IMR-90 (cell line): ENCODE measurements at regions of chr6 and their contacts with region 1.

Region 1: DNA sequence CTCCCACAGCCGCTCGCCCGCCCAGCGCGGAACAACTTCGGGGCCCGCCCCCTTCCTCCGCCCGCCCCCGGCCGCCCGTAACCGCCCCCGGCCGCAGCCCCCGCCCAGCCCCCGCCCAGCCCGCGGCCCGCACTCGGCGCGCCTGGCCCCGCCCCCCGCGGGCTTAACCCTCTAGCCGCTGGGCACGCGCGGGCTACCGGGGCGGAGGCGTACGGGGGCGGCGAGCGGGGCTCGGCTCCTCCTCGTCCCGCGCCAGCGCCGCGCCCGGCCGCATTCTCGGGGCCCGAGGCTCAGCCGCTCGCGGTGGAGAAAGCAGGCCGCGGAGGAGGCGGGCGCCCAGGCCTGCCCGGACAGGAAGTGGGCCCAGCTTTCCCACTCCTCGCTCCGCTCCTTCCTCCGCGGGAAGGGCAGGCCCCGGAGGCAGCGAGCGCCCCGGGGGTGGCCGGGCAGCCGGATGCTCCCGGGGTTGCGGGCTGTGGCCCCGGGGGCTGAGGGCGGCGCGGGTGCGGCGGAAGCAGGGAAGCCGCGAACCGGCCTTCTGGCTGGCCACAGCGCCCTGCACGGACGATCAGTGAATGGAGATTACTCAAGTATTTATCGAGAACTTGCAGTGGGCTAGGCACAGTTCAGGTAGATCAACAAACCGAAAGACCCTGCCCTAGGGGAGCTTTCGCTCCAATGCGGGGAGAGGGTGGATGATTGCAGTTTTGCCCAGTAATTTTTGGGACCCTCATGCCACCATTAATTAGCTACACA is at the start of gene TRAM2:
- DNase-seq: peak; percentile 74
- ATAC-seq: peak; percentile 85
- H3K4me3 ChIP-seq: peak within 1 kb of the TSS; percentile 93
- H3K27ac ChIP-seq: peak within 1 kb of the TSS; percentile 92
- H3K4me1 ChIP-seq: peaks cover 17% of the 10 kb centered on the region
- H3K27me3 ChIP-seq: no peaks in the 10 kb centered on the region
- CTCF ChIP-seq: 0 out of 2 replicates have a peak, but pooled peaks have one; percentile 2
- POLR2A ChIP-seq: peak; percentile 76
- RAD21 ChIP-seq: no peak
- total RNA-seq, gene TRAM2: 77.2 and 81.1 TPM in 2 replicates

Region 2: GRCh38 chr6:52512199-52512598 is 65.0 kb before region 1 on chr6:
- CTCF ChIA-PET with region 1: interaction called, 3 read pairs
- POLR2A ChIA-PET with region 1: no interaction called
- dilution Hi-C with region 1: no loop called
- in situ Hi-C with region 1: no loop called
- intact Hi-C with region 1: loop called (anchors 1 kb)
- DNase-seq: peak; percentile 88
- ATAC-seq: peak; percentile 84
- H3K4me3 ChIP-seq: no peak overlapping the region
- H3K27ac ChIP-seq: peak overlapping the region; percentile 91
- H3K4me1 ChIP-seq: peaks cover 55% of the 10 kb centered on the region
- H3K27me3 ChIP-seq: no peaks in the 10 kb centered on the region
- CTCF ChIP-seq: no peak
- POLR2A ChIP-seq: no peak
- RAD21 ChIP-seq: no peak

Region 3: GRCh38 chr6:52517502-52518278 is 59.5 kb before region 1 on chr6:
- CTCF ChIA-PET with region 1: interaction called, 3 read pairs
- POLR2A ChIA-PET with region 1: no interaction called
- dilution Hi-C with region 1: no loop called
- in situ Hi-C with region 1: no loop called
- intact Hi-C with region 1: loop called (anchors 1 kb)
- DNase-seq: peak; percentile 98
- ATAC-seq: peak; percentile 74
- H3K4me3 ChIP-seq: no peak overlapping the region
- H3K27ac ChIP-seq: peak overlapping the region; percentile 90
- H3K4me1 ChIP-seq: peaks cover 48% of the 10 kb centered on the region
- H3K27me3 ChIP-seq: no peaks in the 10 kb centered on the region
- CTCF ChIP-seq: no peak
- POLR2A ChIP-seq: peak; percentile 72
- RAD21 ChIP-seq: peak; percentile 30; the same call in 1 of the 2 replicates

Region 4: GRCh38 chr6:52551401-52552277 is 25.6 kb before region 1 on chr6:
- CTCF ChIA-PET with region 1: no interaction called
- POLR2A ChIA-PET with region 1: no interaction called
- dilution Hi-C with region 1: no loop called
- in situ Hi-C with region 1: no loop called
- intact Hi-C with region 1: no loop called
- DNase-seq: peak; percentile 91
- ATAC-seq: peak; percentile 47
- H3K4me3 ChIP-seq: no peak overlapping the region
- H3K27ac ChIP-seq: peak overlapping the region; percentile 92
- H3K4me1 ChIP-seq: peaks cover 63% of the 10 kb centered on the region
- H3K27me3 ChIP-seq: no peaks in the 10 kb centered on the region
- CTCF ChIP-seq: no peak
- POLR2A ChIP-seq: no peak
- RAD21 ChIP-seq: no peak

Region 5: DNA sequence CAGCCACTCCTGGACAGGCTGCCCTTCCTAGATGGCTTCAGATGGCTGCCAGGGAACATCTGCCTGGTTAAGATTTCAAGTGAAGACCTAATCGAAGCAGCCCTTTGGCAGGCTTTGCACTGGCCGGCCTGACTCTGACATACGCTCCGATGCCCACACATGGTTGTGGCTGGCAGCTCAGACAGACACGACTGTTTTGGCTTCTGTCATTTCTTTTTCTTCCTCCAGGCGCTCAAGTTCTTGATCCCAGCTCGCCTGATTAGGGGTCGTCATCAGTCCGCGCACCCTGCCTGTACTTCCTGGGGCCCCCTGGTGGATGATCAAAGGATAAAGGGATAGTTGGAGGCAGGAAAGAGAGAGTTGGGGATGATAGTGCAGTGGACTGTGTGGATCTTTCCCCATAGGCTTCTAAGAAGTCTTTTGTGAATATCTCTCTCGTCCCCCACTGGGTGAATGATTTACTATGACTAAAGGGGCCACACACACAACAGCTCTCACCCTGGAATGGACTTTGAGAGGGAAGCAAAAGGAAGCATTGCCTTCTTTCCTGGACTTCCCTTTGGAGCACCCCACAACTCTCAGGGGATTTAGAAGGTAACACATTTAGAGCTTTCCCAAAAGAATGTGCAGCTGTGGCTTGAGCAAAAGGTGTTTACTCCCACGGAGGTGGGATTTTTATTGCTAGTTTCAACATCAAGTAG is 21.1 kb after region 1 on chr6:
- CTCF ChIA-PET with region 1: interaction called, 12 read pairs
- POLR2A ChIA-PET with region 1: interaction called, 4 read pairs
- dilution Hi-C with region 1: no loop called
- in situ Hi-C with region 1: no loop called
- intact Hi-C with region 1: no loop called
- DNase-seq: peak; percentile 74
- ATAC-seq: peak; percentile 8; the same call in 1 of the 2 replicates
- H3K4me3 ChIP-seq: no peak overlapping the region
- H3K27ac ChIP-seq: peak overlapping the region; percentile 3; the same call in 1 of the 2 replicates
- H3K4me1 ChIP-seq: peaks cover 25% of the 10 kb centered on the region
- H3K27me3 ChIP-seq: no peaks in the 10 kb centered on the region
- CTCF ChIP-seq: peak; percentile 73
- POLR2A ChIP-seq: no peak
- RAD21 ChIP-seq: peak; percentile 71

Region 6: GRCh38 chr6:52647199-52647598 is 70.0 kb after region 1 on chr6:
- CTCF ChIA-PET with region 1: interaction called, 4 read pairs
- POLR2A ChIA-PET with region 1: interaction called, 3 read pairs
- dilution Hi-C with region 1: no loop called
- in situ Hi-C with region 1: loop called (anchors 5 kb)
- intact Hi-C with region 1: loop called (anchors 2 kb)
- DNase-seq: peak; percentile 72
- ATAC-seq: peak; percentile 22; the same call in 1 of the 2 replicates
- H3K4me3 ChIP-seq: no peak overlapping the region
- H3K27ac ChIP-seq: peak overlapping the region; percentile 16; the same call in 1 of the 2 replicates
- H3K4me1 ChIP-seq: peaks cover 9% of the 10 kb centered on the region
- H3K27me3 ChIP-seq: no peaks in the 10 kb centered on the region
- CTCF ChIP-seq: no peak
- POLR2A ChIP-seq: no peak
- RAD21 ChIP-seq: no peak

Region 7: GRCh38 chr6:52653151-52653550 is 76.0 kb after region 1 on chr6:
- CTCF ChIA-PET with region 1: interaction called, 4 read pairs
- POLR2A ChIA-PET with region 1: interaction called, 3 read pairs
- dilution Hi-C with region 1: no loop called
- in situ Hi-C with region 1: loop called (anchors 5 kb)
- intact Hi-C with region 1: loop called (anchors 2 kb)
- DNase-seq: no peak
- ATAC-seq: no peak
- H3K4me3 ChIP-seq: no peak overlapping the region
- H3K27ac ChIP-seq: no peak overlapping the region
- H3K4me1 ChIP-seq: peaks cover 2% of the 10 kb centered on the region; the same call in 1 of the 2 replicates
- H3K27me3 ChIP-seq: no peaks in the 10 kb centered on the region; the same call in 1 of the 2 replicates
- CTCF ChIP-seq: no peak
- POLR2A ChIP-seq: no peak
- RAD21 ChIP-seq: no peak

Region 8: DNA sequence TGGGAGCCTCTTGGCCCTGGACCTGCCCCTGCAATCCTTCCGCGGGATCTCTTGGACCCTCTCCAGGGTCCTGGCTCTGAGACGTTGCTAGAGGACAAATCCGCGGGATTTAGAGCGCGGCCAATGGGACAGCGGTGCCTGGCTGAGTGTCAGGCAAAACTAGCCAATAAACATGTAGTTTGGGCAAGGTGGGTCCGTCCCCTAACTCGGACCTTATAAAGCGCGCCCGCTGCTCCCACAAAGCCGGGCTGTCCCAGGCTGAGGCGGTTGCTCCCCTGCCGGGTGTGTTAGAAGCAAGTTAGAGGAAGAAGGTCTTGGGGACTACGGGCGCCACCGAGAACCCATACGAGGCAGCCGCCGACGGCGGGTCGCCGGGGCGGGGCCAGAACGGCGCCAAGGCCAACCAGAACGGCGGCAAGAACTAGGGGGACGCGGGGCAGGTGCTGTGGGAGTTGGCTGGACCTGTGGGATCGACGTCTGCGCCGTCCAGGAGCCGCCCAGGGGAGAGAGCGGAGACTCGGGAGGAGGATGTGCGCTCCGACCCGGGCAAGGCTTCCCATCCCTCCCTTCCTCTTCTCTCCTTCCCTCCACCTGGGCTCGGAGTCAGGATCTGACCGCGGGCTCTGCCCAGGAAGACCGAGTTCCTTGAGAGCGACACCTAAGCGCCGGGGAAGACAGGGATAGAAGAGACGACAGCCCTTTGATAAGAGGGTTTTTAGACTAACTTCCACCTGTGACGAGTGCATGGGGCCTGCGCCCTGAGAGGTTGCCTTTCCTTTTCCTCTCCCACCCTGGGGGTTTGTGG is 87.2 kb after region 1 on chr6:
- CTCF ChIA-PET with region 1: interaction called, 3 read pairs
- POLR2A ChIA-PET with region 1: no interaction called
- dilution Hi-C with region 1: no loop called
- in situ Hi-C with region 1: no loop called
- intact Hi-C with region 1: loop called (anchors 1 kb)
- DNase-seq: peak; percentile 96
- ATAC-seq: peak; percentile 97
- H3K4me3 ChIP-seq: peak overlapping the region; percentile 81
- H3K27ac ChIP-seq: peak overlapping the region; percentile 56
- H3K4me1 ChIP-seq: peaks cover 4% of the 10 kb centered on the region
- H3K27me3 ChIP-seq: no peaks in the 10 kb centered on the region
- CTCF ChIP-seq: no peak
- POLR2A ChIP-seq: peak; percentile 94
- RAD21 ChIP-seq: no peak